ENCODE measurements at regions of chr3 and their contacts with region 1.

Region 1: DNA sequence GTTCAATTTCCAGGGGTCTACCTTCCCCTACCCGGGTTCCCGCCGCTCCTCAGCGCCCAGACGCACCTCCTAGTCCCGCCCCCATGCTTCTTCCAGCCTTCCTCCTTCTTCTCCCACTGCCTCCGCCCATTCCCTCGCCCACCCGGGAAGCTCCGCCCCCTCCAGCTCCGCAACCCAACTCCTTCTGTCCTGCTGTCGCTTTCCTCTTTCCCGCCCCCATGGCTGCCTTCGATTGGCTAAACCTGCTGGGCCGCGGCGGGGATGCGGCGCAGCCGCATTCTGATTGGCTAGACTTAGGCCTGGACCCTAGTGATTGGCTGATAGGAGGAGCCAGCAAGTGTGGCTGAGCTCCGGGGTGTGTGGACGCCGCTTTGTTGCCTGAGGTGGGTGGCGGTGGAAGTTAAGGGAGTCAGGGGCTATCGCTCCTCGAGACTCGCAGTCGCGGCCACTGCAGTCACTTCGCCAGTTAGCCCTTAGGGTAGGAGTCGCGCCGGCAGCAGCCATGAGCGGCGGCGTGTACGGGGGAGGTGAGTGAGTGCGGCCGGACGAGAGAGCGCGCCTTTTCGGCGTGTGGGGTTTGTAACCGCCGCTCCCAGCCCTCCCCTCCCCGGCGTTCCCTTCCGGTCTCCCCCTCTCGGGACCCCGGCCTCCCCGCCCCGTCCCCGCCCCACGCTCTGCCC is at the start of gene ACTL6A:
- DNase-seq: peak; percentile 100
- H3K4me3 Mint-ChIP-seq: peak within 1 kb of the TSS; percentile 97
- H3K27ac Mint-ChIP-seq: peak within 1 kb of the TSS; percentile 76
- H3K4me1 Mint-ChIP-seq: peaks cover 19% of the 10 kb centered on the region
- H3K27me3 Mint-ChIP-seq: no peaks in the 10 kb centered on the region
- CTCF ChIP-seq: no peak
- total RNA-seq, gene ACTL6A: 46.2 and 57.1 TPM in 2 replicates

Region 2: DNA sequence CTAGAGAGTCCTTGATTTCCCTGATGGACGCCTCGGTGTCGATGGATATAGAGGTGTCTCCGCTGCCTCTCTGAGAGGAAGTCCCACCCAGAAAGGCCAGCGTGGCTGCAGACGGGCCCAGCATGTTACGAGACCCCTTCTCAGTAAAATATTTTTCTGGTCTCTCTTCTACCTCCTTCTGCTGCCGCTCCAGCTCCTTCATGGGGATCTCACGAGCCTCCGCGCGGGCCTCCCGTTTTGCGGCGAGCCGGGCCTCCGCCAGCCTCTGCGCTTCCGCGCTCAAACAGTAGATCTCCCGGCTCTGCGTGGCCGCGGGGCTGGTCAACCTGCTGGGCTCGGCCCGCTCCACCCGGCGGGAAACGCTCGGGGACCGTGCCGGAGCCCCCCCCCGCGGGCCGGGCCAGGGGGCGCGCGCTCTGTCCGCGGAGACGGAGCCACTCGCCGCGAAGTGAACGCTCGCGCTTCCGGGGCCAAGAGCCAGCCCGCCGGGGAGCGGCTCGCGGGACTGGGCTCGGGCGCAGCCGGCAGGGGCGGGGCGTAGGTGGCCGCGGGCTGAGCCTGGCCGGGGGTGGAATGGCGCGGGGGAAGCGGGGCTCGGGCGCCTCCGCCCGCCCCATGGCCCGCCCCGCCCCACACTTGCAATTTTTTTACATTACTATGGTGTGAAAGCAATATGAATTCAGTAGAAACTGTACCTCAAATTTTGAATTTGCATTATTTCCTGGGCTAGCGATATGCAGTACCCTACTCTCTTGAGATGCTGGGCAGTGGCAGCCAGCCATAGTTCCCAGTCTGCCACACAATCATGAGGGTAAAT is 301.6 kb before region 1 on chr3:
- CTCF ChIA-PET with region 1: no interaction called
- POLR2A ChIA-PET with region 1: no interaction called
- intact Hi-C with region 1: no loop called
- DNase-seq: no peak
- H3K4me3 Mint-ChIP-seq: peak overlapping the region; percentile 44
- H3K27ac Mint-ChIP-seq: no peak overlapping the region
- H3K4me1 Mint-ChIP-seq: no peaks in the 10 kb centered on the region
- H3K27me3 Mint-ChIP-seq: no peaks in the 10 kb centered on the region
- CTCF ChIP-seq: no peak

Region 3: GRCh38 chr3:179322286-179323196 is 240.2 kb before region 1 on chr3 and contains the start of gene ZNF639:
- CTCF ChIA-PET with region 1: no interaction called
- POLR2A ChIA-PET with region 1: interaction called, 8 read pairs
- intact Hi-C with region 1: loop called (anchors 1 kb)
- DNase-seq: peak; percentile 72
- H3K4me3 Mint-ChIP-seq: peak within 1 kb of the TSS; percentile 81
- H3K27ac Mint-ChIP-seq: peak within 1 kb of the TSS; percentile 90
- H3K4me1 Mint-ChIP-seq: peaks cover 20% of the 10 kb centered on the region
- H3K27me3 Mint-ChIP-seq: no peaks in the 10 kb centered on the region
- CTCF ChIP-seq: peak; percentile 68
- total RNA-seq, gene ZNF639: 35.5 and 52.8 TPM in 2 replicates

Region 4: GRCh38 chr3:179421500-179421899 is 141.2 kb before region 1 on chr3:
- CTCF ChIA-PET with region 1: interaction called, 16 read pairs
- POLR2A ChIA-PET with region 1: interaction called, 4 read pairs
- intact Hi-C with region 1: loop called (anchors 1 kb)
- DNase-seq: peak; percentile 33
- H3K4me3 Mint-ChIP-seq: no peak overlapping the region
- H3K27ac Mint-ChIP-seq: no peak overlapping the region
- H3K4me1 Mint-ChIP-seq: no peaks in the 10 kb centered on the region
- H3K27me3 Mint-ChIP-seq: no peaks in the 10 kb centered on the region
- CTCF ChIP-seq: peak; percentile 44

Region 5: GRCh38 chr3:179450901-179451264 is 111.8 kb before region 1 on chr3:
- CTCF ChIA-PET with region 1: interaction called, 24 read pairs
- POLR2A ChIA-PET with region 1: interaction called, 12 read pairs
- intact Hi-C with region 1: loop called (anchors 1 kb)
- DNase-seq: peak; percentile 47
- H3K4me3 Mint-ChIP-seq: peak overlapping the region; percentile 82
- H3K27ac Mint-ChIP-seq: peak overlapping the region; percentile 89
- H3K4me1 Mint-ChIP-seq: peaks cover 29% of the 10 kb centered on the region
- H3K27me3 Mint-ChIP-seq: no peaks in the 10 kb centered on the region
- CTCF ChIP-seq: no peak

Region 6: GRCh38 chr3:179604321-179605078 is 41.8 kb after region 1 on chr3 and contains the starts of genes MRPL47 and NDUFB5:
- CTCF ChIA-PET with region 1: no interaction called
- POLR2A ChIA-PET with region 1: interaction called, 40 read pairs
- intact Hi-C with region 1: no loop called
- DNase-seq: peak; percentile 97
- H3K4me3 Mint-ChIP-seq: peak within 1 kb of the TSS; percentile 100
- H3K27ac Mint-ChIP-seq: peak within 1 kb of the TSS; percentile 100
- H3K4me1 Mint-ChIP-seq: peaks cover 9% of the 10 kb centered on the region
- H3K27me3 Mint-ChIP-seq: no peaks in the 10 kb centered on the region
- CTCF ChIP-seq: no peak
- total RNA-seq, gene MRPL47: 58.3 and 63.4 TPM in 2 replicates
- total RNA-seq, gene NDUFB5: 88.2 and 115 TPM in 2 replicates